Dorsolateral prefrontal cortex (tissue), 120 donors: ENCODE measurements at regions of chr16 and their contacts with region 1.

Region 1: DNA sequence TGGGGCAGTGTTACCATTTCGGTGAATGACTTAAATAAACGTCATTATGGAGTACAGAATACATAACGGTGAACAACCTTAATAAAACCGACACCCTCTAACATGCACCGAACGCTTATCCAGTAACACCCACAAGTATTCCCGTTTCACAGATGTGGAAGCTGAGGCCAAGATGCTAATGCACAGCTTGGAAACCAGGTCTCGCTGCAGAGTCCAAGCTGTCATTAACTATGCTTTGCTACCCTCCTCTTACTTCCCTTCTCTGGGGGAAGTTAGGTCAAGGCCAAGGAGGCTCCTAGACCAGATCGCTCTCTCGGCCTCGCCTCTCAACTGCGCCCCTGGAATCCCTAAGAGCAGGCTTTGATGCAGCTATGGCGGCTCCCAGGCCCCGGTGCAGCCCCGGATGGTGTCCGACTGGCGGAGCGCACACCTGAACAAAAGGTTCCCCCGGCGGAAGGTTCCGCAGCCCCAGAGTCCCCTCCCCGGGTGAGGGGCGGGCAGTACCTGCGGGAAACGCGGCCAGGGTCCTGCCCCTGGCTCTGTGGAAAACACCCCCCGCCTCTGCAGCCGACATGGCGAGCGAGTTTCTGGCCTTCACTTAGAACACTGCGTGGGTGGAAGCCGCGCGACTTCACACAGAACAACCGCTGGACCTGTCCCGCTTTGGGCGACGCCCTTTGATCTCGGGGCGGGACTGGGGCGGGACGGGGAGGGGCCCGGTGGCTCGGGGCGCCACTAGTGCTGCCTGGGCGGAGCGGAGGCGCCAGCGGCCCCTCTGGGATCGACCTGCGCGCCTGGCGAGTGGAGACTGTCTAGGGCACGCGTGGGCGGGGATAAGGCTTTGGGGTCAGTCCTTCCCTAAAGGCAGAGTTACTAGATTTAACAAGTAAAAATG is at the start of gene CPPED1:
- DNase-seq: peak; percentile 74 to 94 (median 90)
- H3K4me3 ChIP-seq: peak within 1 kb of the TSS; percentile 48 to 89 (median 74)
- H3K27ac ChIP-seq: peak within 1 kb of the TSS; percentile 11 to 96 (median 88)
- H3K27me3 ChIP-seq: no peaks in the 10 kb centered on the region
- CTCF ChIP-seq: peak in 27 of 56 donors; percentile 3 to 57 (median 30)
- total RNA-seq, gene CPPED1: 8.3 to 42.3 (median 17.7) TPM

Region 2: GRCh38 chr16:12763517-12763916 is 39.9 kb before region 1 on chr16:
- intact Hi-C with region 1: loop called in 1 of 2 experiments (anchors 5 kb)
- DNase-seq: no peak
- H3K4me3 ChIP-seq: no peak overlapping the region
- H3K27ac ChIP-seq: no peak overlapping the region
- H3K27me3 ChIP-seq: no peaks in the 10 kb centered on the region
- CTCF ChIP-seq: no peak